ENCODE measurements at regions of chr7 and their contacts with region 1.

Region 1: DNA sequence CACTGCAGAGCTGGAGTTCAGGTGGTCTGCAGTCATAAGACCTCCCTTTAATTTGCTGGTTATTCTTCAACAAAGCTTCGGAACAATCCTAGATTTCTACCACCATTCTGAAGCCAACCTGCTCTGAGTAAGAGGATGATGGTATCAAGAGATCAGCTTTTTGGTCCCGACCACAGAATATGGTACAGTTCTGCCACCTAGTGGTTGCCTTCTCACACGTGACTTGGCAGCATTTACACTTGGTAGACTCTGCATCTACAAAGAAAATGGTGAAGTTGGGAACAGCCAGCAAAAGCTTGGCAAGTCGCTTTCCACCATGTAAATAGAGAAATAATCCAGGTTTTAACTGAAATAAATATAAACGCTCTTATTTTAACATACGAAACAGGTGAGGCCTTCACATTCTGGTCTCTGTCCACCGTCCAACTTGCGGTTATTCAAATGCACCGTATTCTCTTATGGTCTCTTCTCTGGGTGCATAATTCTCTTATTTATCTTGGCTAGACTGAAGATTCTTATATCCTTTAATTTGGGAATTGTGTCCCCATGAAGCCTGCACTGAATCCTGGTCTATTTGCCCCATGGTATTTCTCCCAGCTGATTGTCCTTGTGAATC is 173.9 kb upstream of the GRM3 start:
- DNase-seq: peak in 1 of 2 donors; percentile 63
- H3K4me3 ChIP-seq: no peak overlapping the region
- H3K27ac ChIP-seq: no peak overlapping the region
- H3K4me1 ChIP-seq: no peaks in the 10 kb centered on the region
- H3K27me3 ChIP-seq: no peaks in the 10 kb centered on the region
- CTCF ChIP-seq: peak in 2 of 3 experiments; percentile 28 to 32

Region 2: DNA sequence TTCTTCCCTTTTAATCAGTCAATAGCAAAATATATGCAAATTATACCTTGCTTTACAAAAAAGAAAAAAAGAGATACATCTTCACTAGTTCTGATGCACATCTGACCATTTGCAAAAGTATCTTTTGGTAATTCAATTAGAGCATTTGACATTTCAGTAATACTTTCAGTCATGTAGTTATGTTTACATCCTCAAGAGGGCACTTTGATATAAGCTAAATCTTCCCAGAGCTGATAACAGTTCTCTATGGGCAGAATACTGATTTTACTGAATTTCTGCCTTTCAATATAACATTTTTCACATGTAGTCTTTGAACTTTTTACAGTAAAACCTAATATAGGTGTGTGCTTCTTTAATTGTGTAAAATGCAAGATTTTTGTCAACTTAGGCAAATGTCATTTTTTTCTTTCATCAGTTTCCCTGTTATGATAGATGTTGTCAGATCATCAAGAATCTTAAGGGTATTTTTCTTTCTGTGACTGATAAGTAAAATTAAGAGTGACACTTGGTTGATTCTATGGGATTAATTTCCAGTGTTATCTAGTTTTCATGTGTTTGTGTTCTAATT is 579.5 kb before region 1 on chr7:
- intact Hi-C with region 1: loop called (anchors 5 kb)
- DNase-seq: no peak
- H3K4me3 ChIP-seq: no peak overlapping the region
- H3K27ac ChIP-seq: no peak overlapping the region
- H3K4me1 ChIP-seq: no peaks in the 10 kb centered on the region
- H3K27me3 ChIP-seq: no peaks in the 10 kb centered on the region
- CTCF ChIP-seq: peak in 1 of 3 experiments; percentile 36

Region 3: DNA sequence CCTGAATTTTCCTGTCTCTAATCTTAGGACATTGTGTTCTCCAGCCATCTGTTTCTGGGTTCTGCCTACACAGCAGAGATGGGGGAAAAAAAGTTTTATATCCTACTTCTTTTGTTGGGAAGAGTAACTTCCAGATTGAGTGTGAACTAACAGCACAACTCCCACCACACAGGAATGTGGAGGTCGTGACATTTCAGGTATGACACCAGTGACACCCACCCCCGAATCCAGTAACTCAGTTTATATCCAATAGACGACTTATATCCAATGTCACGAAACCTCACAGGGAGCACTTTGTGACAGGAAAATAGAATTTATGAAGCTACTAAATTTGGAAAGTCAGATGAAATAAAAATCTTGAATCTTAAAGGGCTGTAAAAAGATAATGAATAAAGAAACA is 38.0 kb before region 1 on chr7:
- intact Hi-C with region 1: no loop called
- DNase-seq: no peak
- H3K4me3 ChIP-seq: no peak overlapping the region
- H3K27ac ChIP-seq: no peak overlapping the region
- H3K4me1 ChIP-seq: no peaks in the 10 kb centered on the region
- H3K27me3 ChIP-seq: no peaks in the 10 kb centered on the region
- CTCF ChIP-seq: no peak

Region 4: DNA sequence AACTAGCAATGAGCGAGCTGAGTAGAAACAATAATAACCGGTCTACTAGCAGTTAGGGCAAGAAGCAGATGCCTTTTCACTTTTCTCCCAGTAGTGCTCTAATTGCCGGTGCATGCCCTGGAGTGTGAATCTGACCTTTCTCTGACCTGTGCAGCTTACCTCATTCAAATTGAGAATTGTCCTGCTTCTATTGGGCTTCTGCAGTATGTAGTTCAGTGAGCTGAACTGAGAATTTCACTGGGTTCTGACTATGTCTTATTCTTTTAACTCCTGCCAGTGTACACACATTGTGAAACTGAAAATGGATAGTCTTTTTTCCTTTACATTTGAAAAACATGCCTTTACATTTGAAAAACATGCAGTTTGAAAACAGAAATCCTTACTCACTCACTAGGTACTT is 16.0 kb after region 1 on chr7:
- intact Hi-C with region 1: no loop called
- DNase-seq: no peak
- H3K4me3 ChIP-seq: no peak overlapping the region
- H3K27ac ChIP-seq: no peak overlapping the region
- H3K4me1 ChIP-seq: no peaks in the 10 kb centered on the region
- H3K27me3 ChIP-seq: no peaks in the 10 kb centered on the region
- CTCF ChIP-seq: no peak

Region 5: DNA sequence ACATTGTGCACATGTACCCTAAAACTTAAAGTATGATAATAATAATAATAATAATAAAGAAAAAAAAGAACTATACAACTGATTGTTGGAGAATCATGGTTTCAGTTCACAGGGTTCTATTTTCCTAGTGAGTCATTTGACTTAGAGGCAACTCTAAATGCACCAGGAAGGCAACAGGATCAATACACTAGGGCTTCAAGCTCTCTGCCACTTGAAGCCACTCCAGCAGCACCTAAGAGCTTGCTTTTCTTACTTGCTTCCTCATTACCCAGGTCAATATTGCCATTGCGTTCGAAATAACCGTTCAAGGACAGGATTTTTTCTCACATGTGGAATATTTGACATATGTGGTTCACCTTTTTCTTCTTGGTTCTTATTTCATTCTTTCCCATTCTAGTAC is 363.6 kb after region 1 on chr7:
- intact Hi-C with region 1: no loop called
- DNase-seq: no peak
- H3K4me3 ChIP-seq: no peak overlapping the region
- H3K27ac ChIP-seq: no peak overlapping the region
- H3K4me1 ChIP-seq: no peaks in the 10 kb centered on the region
- H3K27me3 ChIP-seq: no peaks in the 10 kb centered on the region
- CTCF ChIP-seq: no peak